ENCODE measurements at regions of chr2 and their contacts with region 1.

Region 1: DNA sequence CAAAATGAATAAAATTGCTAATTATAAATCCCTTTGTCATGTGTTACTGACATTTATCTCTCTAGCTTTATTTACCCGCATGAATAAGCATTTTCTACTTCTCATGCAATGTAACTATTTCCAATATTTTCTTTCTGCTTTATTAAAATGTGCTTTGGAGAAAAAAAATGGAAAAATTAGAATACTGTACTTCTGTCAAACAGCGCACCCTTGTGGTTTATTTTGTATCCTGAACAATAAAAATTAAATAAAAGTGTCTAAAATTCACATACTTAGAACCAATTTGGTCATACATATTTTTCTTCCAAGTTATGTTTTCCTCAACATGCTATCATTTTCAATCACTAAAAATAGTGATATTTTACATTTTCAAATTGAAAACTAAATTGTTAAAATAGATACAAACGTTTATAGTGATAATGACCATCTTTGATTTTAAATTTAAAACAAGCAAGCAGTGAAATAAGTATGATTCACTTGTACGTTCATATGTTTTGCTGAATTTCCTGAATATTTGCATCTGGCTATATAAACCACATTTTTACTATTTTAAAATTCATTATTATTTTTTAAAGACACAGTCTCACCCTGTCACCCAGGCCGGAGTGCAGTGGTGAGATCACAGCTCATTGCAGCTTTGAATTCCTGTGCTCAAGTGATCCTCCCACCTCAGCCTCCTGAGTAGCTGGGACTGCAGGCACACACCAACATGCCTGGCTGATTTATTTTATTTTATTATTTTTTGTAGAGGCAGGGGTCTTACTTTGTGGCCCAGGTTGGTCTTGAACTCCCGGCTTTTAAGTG is 95.9 kb upstream of the GRB14 start:
- DNase-seq: no peak
- H3K4me3 Mint-ChIP-seq: no peak overlapping the region
- H3K27ac Mint-ChIP-seq: no peak overlapping the region
- H3K4me1 Mint-ChIP-seq: no peaks in the 10 kb centered on the region
- H3K27me3 Mint-ChIP-seq: no peaks in the 10 kb centered on the region

Region 2: GRCh38 chr2:163859951-163860350 is 857.3 kb before region 1 on chr2:
- intact Hi-C with region 1: no loop called
- DNase-seq: no peak
- H3K4me3 Mint-ChIP-seq: no peak overlapping the region
- H3K27ac Mint-ChIP-seq: no peak overlapping the region
- H3K4me1 Mint-ChIP-seq: no peaks in the 10 kb centered on the region
- H3K27me3 Mint-ChIP-seq: no peaks in the 10 kb centered on the region

Region 3: GRCh38 chr2:164560181-164560792 is 156.9 kb before region 1 on chr2:
- intact Hi-C with region 1: loop called (anchors 2 kb)
- DNase-seq: peak; percentile 32
- H3K4me3 Mint-ChIP-seq: no peak overlapping the region
- H3K27ac Mint-ChIP-seq: no peak overlapping the region
- H3K4me1 Mint-ChIP-seq: no peaks in the 10 kb centered on the region
- H3K27me3 Mint-ChIP-seq: no peaks in the 10 kb centered on the region

Region 4: DNA sequence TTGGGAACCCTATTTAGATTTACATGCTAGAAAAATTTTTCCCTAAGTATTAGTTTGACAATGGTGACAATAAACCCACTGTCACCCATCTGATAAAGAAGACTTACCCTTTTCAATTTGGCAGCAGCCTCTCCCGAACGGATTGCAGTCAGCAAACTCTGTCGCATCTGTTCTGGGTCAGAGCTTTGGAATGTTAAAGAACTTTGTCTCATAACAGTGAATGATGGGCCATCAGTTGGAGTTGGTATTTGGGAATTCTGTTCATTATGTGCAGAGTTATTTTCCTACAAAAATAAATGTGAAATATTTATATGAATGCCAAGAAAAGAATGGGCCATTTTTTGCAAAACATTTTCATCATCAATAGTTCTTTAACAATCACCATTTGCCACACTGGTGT is 25.1 kb before region 1 on chr2:
- intact Hi-C with region 1: no loop called
- DNase-seq: no peak
- H3K4me3 Mint-ChIP-seq: no peak overlapping the region
- H3K27ac Mint-ChIP-seq: no peak overlapping the region
- H3K4me1 Mint-ChIP-seq: no peaks in the 10 kb centered on the region
- H3K27me3 Mint-ChIP-seq: no peaks in the 10 kb centered on the region

Measured in activated CD4-positive, alpha-beta T cell treated with anti-CD3 and anti-CD28 coated beads, Interleukin-2, amount 10 ng/mL, durations not matched to agents 24 days and 14 days (primary cell).